ENCODE measurements at regions of chr10 and their contacts with region 1.

Region 1: DNA sequence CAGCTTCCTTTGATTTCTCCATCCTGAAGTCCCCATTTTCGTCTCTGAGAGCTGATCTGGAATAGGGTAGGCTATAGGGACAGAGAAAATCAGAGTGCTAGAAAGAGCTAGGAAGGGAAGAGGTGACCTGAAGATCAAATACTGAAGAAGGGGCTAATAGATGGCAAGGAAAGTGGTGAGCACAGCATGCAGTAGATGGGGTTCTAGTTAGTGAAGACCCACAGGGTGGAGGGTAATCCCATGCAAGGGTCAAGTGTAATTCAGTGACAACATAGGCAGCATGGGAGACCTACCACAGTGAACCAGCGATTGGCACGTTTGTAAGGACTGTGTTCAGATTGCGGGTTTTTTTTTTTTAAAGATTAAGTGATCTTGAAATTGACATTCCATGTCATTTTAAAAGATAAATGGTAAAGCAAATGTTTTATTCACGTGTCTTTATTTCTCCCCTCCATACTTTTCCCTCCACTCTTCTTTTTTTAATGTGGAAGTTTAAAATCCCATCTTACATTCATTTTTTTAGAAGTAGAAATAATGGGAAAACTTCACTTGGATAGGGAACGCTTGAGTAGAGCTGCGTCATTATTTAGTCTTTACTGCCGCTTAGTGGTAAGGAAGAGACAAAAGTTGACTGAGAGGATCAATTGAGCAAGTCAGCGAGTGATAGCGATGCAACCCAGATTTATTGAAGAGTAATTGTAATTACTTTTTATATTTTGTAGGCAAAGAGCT is 21.0 kb upstream of the ABI1 start:
- DNase-seq: peak; percentile 77
- H3K4me3 Mint-ChIP-seq: no peak overlapping the region
- H3K27ac Mint-ChIP-seq: no peak overlapping the region
- H3K4me1 Mint-ChIP-seq: peaks cover 14% of the 10 kb centered on the region
- H3K27me3 Mint-ChIP-seq: peaks cover 21% of the 10 kb centered on the region
- CTCF ChIP-seq: peak; percentile 62

Region 2: GRCh38 chr10:26334932-26335573 is 546.7 kb before region 1 on chr10:
- CTCF ChIA-PET with region 1: interaction called, 3 read pairs
- POLR2A ChIA-PET with region 1: no interaction called
- intact Hi-C with region 1: loop called (anchors 1 kb)
- DNase-seq: peak; percentile 66
- H3K4me3 Mint-ChIP-seq: no peak overlapping the region
- H3K27ac Mint-ChIP-seq: no peak overlapping the region
- H3K4me1 Mint-ChIP-seq: no peaks in the 10 kb centered on the region
- H3K27me3 Mint-ChIP-seq: peaks cover 36% of the 10 kb centered on the region
- CTCF ChIP-seq: peak; percentile 87

Region 3: DNA sequence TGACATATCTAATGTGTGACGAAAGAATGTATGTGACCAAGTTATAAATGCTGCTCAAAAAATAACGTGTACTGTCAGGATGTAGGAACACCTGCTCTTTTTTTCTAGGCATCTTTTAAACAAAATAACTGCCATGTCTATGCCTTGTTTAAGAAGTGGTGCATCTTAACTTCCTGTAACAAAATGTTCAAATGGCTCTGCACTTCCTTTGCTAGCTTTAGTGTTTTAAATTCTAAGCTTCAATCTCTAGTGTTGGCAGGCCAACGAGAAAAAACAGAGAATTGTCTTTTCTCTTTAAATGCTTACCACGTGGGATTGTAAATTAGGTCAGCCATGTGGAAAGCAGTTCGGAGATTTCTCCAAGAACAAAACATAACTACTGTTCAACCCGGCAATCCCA is 198.8 kb before region 1 on chr10:
- CTCF ChIA-PET with region 1: interaction called, 10 read pairs
- POLR2A ChIA-PET with region 1: interaction called, 3 read pairs
- intact Hi-C with region 1: loop called (anchors 2 kb)
- DNase-seq: no peak
- H3K4me3 Mint-ChIP-seq: no peak overlapping the region
- H3K27ac Mint-ChIP-seq: no peak overlapping the region
- H3K4me1 Mint-ChIP-seq: peaks cover 11% of the 10 kb centered on the region
- H3K27me3 Mint-ChIP-seq: no peaks in the 10 kb centered on the region
- CTCF ChIP-seq: no peak

Region 4: GRCh38 chr10:26755443-26755903 is 126.3 kb before region 1 on chr10:
- CTCF ChIA-PET with region 1: interaction called, 20 read pairs
- POLR2A ChIA-PET with region 1: interaction called, 3 read pairs
- intact Hi-C with region 1: no loop called
- DNase-seq: peak; percentile 65
- H3K4me3 Mint-ChIP-seq: no peak overlapping the region
- H3K27ac Mint-ChIP-seq: peak overlapping the region; percentile 46
- H3K4me1 Mint-ChIP-seq: peaks cover 6% of the 10 kb centered on the region
- H3K27me3 Mint-ChIP-seq: no peaks in the 10 kb centered on the region
- CTCF ChIP-seq: no peak

Region 5: DNA sequence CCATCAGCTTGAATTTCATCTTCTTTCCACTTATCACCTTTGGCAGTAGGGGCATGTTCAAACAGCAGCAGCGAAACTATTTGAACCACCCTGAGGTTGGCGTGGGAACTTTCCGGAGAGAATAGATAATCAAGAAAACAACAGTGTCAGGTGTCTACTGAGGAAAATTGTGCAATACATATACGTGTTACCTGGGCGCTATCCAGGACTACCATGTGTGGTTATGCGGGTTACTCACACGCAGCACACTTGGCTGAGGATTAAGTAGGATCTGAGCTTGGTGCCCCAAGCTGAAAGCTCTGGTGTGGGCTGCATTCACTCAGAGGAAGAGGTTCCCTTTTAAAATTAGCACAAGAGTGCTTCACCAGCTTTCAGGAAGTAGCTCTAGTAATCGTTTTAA is 12.2 kb before region 1 on chr10:
- CTCF ChIA-PET with region 1: interaction called, 30 read pairs
- POLR2A ChIA-PET with region 1: interaction called, 19 read pairs
- intact Hi-C with region 1: no loop called
- DNase-seq: peak; percentile 98
- H3K4me3 Mint-ChIP-seq: peak overlapping the region; percentile 15
- H3K27ac Mint-ChIP-seq: peak overlapping the region; percentile 91
- H3K4me1 Mint-ChIP-seq: peaks cover 20% of the 10 kb centered on the region
- H3K27me3 Mint-ChIP-seq: no peaks in the 10 kb centered on the region
- CTCF ChIP-seq: no peak